Right ventricle myocardium superior (tissue), 1 donor: ENCODE measurements at regions of chr19 and their contacts with region 1.

Region 1: GRCh38 chr19:42529248-42529764 is 1.0 kb upstream of the CEACAM1 start:
- DNase-seq: peak; percentile 67
- ATAC-seq: peak; percentile 74

Region 2: DNA sequence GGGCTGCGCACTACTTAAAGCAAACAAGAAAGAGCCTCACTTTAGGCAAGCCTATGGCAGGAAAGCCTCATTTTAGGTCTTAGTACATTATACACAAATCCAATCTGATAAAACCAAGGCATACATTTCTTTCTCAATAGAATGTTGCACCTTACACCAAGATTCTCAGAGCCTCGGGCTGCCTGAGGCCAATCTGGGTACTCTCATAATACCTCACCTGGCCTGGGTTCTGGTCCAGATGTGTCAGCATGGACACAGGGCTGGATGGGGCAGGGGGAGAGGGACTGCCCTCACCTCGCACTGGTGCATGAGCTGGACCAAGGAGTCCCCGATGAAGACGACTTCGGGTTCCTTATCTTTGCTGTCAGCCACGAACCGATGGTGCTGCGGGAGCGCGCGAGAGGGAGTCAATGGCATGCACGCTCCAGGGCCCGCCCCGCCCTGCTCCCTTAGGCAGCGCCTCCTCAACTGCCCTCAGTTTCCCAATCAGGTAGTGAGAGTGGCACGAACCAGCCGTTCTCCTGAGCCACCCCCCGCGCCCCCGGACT is 227.6 kb before region 1 on chr19 and contains the start of gene PRR19:
- intact Hi-C with region 1: no loop called
- DNase-seq: no peak
- ATAC-seq: peak; percentile 29
- total RNA-seq, gene PRR19: not detected

Region 3: GRCh38 chr19:42450314-42450934 is 78.9 kb before region 1 on chr19:
- intact Hi-C with region 1: loop called (anchors 5 kb)
- DNase-seq: peak; percentile 81
- ATAC-seq: peak; percentile 89

Region 4: DNA sequence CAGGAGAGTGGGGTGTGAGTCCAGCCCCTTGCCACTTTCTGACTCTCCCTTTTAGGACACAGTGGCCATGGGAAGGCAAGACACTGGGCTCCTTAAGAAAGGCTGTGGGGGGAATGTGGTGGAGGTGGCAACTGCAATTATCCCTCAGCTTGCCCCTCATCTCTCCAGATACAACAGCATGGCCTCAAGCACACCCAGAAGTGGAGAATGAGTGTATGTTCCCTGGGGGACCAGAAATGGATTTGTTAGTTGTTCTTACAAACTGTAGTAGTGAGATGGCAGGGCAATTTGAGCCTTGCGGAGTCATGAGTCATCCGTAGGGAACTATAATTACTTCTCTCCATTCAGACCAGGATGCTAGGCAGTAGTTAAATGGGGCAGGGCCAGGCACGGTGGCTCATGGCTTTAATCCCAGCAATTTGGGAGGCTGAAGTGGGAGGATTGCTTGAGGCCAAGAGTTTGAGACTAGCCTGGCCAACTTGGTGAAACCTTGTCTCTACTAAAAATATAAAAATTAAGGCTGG is 61.0 kb before region 1 on chr19:
- intact Hi-C with region 1: loop called (anchors 5 kb)
- DNase-seq: no peak
- ATAC-seq: no peak